AG04450 (cell line): ENCODE measurements at regions of chr18 and their contacts with region 1.

Region 1: GRCh38 chr18:76803814-76804213 is 18.5 kb upstream of the ZNF236 start:
- DNase-seq: no peak
- H3K4me3 ChIP-seq: peak overlapping the region; percentile 38; the same call in 1 of the 2 replicates
- H3K27ac ChIP-seq: no peak overlapping the region
- H3K27me3 ChIP-seq: peaks cover 6% of the 10 kb centered on the region
- CTCF ChIP-seq: peak; percentile 94

Region 2: DNA sequence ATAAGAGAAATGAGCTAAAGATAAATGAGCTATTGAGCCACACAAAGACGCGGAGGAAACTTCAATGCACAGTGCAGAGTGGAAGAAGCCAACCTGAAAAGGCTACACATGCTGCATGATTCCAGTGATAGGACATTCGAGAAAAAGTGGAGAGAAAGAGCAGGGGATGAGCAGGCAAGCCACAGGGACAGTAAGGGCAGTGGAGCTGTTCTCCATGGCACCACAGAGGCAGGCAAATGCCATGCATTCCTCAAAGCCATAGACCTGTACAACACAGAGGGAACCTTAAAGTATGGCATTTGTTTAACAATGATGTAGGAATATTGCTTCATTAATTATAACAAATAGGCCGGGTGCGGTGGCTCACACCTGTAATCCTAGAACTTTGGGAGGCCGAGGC is 17.9 kb before region 1 on chr18:
- CTCF ChIA-PET with region 1: interaction called, 62 read pairs
- POLR2A ChIA-PET with region 1: no interaction called
- DNase-seq: no peak
- H3K4me3 ChIP-seq: no peak overlapping the region
- H3K27ac ChIP-seq: no peak overlapping the region
- H3K27me3 ChIP-seq: no peaks in the 10 kb centered on the region
- CTCF ChIP-seq: no peak

Region 3: GRCh38 chr18:76822510-76823160 is 18.8 kb after region 1 on chr18 and contains the start of gene ZNF236:
- CTCF ChIA-PET with region 1: interaction called, 165 read pairs
- POLR2A ChIA-PET with region 1: no interaction called
- DNase-seq: peak; percentile 47
- H3K4me3 ChIP-seq: peak within 1 kb of the TSS; percentile 96
- H3K27ac ChIP-seq: peak within 1 kb of the TSS; percentile 80
- H3K27me3 ChIP-seq: no peaks in the 10 kb centered on the region
- CTCF ChIP-seq: no peak
- polyA plus RNA-seq, gene ZNF236: 5.3 and 5.5 TPM in 2 replicates

Region 4: DNA sequence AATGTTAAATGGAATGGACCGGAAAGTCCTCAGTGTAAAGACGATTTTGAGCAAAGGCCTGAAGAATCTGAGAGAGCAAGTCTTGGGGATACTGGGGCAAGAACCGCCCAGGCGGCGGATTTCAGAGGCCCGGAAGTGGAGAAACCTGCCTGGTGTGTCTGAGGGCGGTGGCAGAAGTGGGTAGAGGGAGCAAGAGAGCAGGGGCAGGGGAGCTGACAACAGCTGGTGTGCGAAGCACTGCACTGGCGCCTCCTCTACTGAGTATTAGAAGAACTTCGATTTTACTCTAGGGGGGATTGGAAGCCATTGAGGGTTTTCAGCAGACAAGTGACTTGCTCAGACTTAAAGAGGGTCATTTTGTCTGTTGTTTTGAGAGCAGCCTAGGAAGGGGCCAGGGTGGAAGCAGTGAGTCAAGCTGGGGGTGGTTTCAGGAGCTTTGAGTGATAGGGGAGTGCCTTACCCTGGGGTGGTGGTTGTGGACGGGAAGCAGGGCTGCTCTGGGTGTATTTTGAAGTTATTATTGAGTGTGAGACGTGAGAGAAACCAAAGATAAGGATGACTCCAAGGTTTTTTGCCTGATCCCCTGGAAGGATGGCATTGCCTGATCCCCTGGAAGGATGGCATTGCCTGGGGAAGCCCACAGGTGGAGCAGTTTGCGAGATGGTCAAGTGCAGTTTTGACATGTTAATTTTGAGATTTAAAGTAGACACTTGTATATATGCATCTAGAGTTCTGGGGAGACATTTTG is 71.0 kb after region 1 on chr18:
- CTCF ChIA-PET with region 1: interaction called, 15 read pairs
- POLR2A ChIA-PET with region 1: no interaction called
- DNase-seq: no peak
- H3K4me3 ChIP-seq: no peak overlapping the region
- H3K27ac ChIP-seq: no peak overlapping the region
- H3K27me3 ChIP-seq: no peaks in the 10 kb centered on the region
- CTCF ChIP-seq: no peak

Region 5: GRCh38 chr18:77054606-77055428 is 251.0 kb after region 1 on chr18:
- CTCF ChIA-PET with region 1: interaction called, 15 read pairs
- POLR2A ChIA-PET with region 1: no interaction called
- DNase-seq: peak; percentile 71
- H3K4me3 ChIP-seq: no peak overlapping the region
- H3K27ac ChIP-seq: peak overlapping the region; percentile 70
- H3K27me3 ChIP-seq: no peaks in the 10 kb centered on the region
- CTCF ChIP-seq: peak; percentile 92